ENCODE measurements at regions of chr4 and their contacts with region 1.

Region 1: DNA sequence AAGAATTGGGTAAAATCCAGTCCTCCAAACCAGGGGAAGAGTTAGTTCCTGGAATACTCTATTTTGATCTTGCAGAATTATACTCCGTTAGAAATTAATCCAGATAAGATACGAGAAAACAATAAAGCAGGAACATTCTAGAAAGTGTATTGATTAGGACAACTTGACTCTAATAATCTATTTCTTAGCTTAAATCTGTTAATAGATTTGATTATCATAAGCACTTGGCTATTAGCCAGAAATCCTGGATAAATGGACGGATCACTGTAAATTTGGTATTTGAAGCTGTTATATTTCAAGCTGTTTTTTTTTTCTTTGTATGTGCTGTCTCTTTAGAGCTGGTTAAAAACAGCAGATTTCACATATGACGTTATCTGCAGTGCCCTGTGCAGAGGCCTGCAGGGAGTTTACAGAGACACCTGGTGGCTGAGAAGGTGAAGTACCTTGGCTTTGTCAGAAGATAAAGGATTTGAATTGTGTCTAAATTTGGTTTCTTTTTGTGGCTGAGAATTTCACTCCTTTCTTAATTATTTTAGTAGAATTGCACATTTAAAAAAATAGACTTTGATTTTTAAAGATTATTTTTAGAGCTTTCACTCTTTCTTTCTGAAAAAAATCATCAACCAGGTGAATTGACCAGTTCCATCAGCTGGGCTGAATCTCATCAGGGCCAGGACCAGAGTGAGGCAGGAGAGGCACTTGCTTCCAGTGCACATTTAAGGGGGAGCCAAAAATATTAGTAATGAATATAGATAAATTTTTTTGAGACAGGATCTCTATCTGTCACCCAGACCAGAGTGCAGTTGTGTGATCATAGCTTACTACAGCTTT is 9.7 kb upstream of the CHRNA9 start:
- DNase-seq: peak; percentile 52
- H3K4me3 ChIP-seq: no peak overlapping the region
- H3K27ac ChIP-seq: no peak overlapping the region
- H3K4me1 ChIP-seq: peaks cover 13% of the 10 kb centered on the region
- H3K27me3 ChIP-seq: no peaks in the 10 kb centered on the region
- CTCF ChIP-seq: peak; percentile 91 to 95

Region 2: GRCh38 chr4:40719008-40719623 is 393.7 kb after region 1 on chr4:
- CTCF ChIA-PET with region 1: no interaction called
- dilution Hi-C with region 1: no loop called
- in situ Hi-C with region 1: no loop called
- intact Hi-C with region 1: loop called (anchors 2 kb)
- DNase-seq: peak; percentile 34
- H3K4me3 ChIP-seq: no peak overlapping the region
- H3K27ac ChIP-seq: no peak overlapping the region
- H3K4me1 ChIP-seq: no peaks in the 10 kb centered on the region
- H3K27me3 ChIP-seq: no peaks in the 10 kb centered on the region
- CTCF ChIP-seq: peak; percentile 39 to 67

Region 3: DNA sequence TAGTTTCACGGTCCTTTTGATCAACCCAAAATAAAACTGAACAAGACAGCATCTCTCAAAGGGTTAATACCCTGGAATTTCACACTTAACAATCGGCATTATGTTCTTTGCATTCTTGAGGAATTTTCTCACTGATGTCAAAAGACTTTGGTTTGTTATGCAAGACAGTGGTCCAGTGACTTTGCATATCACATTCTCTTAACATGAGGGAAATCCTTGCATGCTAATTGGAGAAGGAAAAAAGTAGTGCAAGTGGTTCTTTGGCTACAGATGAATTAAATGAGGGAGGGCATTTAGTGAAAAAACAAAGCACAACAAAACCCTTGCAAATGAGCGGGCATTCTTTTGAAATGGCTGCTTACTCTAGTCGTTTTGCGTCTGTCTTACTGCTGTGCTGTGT is 1107.5 kb after region 1 on chr4:
- CTCF ChIA-PET with region 1: no interaction called
- dilution Hi-C with region 1: no loop called
- in situ Hi-C with region 1: no loop called
- intact Hi-C with region 1: no loop called
- DNase-seq: peak; percentile 4
- H3K4me3 ChIP-seq: no peak overlapping the region
- H3K27ac ChIP-seq: no peak overlapping the region
- H3K4me1 ChIP-seq: no peaks in the 10 kb centered on the region
- H3K27me3 ChIP-seq: no peaks in the 10 kb centered on the region
- CTCF ChIP-seq: no peak

Measured in mammary epithelial cell (primary cell).